ENCODE measurements at regions of chr3 and their contacts with region 1.

Region 1: DNA sequence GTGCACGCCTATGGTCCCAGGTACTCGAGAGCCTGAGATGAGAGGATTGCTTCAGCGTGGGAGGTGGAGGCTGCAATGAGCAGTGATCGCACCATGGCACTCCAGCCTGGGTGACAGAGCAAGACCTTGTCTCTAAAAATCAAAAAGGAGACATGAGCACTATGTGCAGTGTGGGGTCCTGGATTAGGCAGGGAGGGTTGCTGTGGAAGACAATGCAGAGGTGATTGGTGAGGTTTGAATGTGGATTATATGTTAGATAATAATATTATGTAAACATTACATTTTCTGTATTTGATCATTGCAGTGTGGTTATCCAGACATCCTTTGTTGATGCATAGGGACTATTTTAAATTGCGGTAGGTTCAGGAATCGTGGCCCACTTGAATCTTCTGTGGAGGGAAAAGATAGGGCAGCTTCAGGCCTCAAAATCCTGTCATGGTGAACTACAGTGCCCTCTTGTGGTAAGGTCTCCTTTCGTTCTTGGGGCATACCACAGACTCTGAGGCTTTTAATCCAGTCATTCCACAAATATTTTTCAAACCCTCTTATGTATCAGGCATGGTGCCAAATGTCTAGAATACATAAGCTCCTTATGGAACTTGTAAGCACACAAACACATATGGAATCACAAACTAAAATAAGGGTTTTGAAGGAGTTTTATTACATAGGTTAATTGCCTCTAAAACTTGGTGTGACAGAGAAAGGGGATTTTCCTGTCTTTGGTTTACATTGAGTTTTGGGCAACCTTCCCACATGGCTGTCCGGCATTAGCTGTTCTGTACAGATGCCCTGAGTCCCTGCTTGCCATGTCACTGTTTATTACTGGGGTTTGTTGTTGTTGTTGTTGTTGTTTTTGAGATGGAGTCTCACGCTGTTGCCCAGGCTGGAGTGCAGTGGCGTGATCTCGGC is 37.7 kb downstream of the GPD1L start:
- DNase-seq: no peak
- H3K4me3 ChIP-seq: no peak overlapping the region
- H3K27ac ChIP-seq: no peak overlapping the region
- H3K4me1 ChIP-seq: peaks cover 0 to 6% (median 4%) of the 10 kb centered on the region in 4 experiments; a peak in 4 of 7 replicates
- H3K27me3 ChIP-seq: no peaks in the 10 kb centered on the region
- CTCF ChIP-seq: peak; percentile 26 to 81 (median 77)
- EP300 ChIP-seq: no peak
- POLR2A ChIP-seq: no peak
- RAD21 ChIP-seq: peak; percentile 89 to 91

Region 2: GRCh38 chr3:31968927-31969418 is 175.1 kb before region 1 on chr3:
- CTCF ChIA-PET with region 1: interaction called, 10 read pairs
- POLR2A ChIA-PET with region 1: no interaction called
- DNase-seq: no peak
- H3K4me3 ChIP-seq: no peak overlapping the region
- H3K27ac ChIP-seq: no peak overlapping the region
- H3K4me1 ChIP-seq: peaks cover 8 to 20% (median 14%) of the 10 kb centered on the region in 4 experiments
- H3K27me3 ChIP-seq: no peaks in the 10 kb centered on the region
- CTCF ChIP-seq: no peak
- EP300 ChIP-seq: no peak
- POLR2A ChIP-seq: no peak
- RAD21 ChIP-seq: no peak